ENCODE measurements at regions of chrX and their contacts with region 1.

Region 1: GRCh38 chrX:100512471-100512870 is 72.3 kb upstream of the TNMD start:
- DNase-seq: peak; percentile 9
- H3K4me3 ChIP-seq: no peak overlapping the region
- H3K27ac ChIP-seq: no peak overlapping the region
- H3K4me1 ChIP-seq: no peaks in the 10 kb centered on the region
- H3K27me3 ChIP-seq: no peaks in the 10 kb centered on the region
- CTCF ChIP-seq: peak; percentile 8 to 16
- POLR2A ChIP-seq: no peak

Region 2: GRCh38 chrX:100447654-100448397 is 64.6 kb before region 1 on chrX:
- CTCF ChIA-PET with region 1: interaction called, 10 read pairs
- POLR2A ChIA-PET with region 1: no interaction called
- dilution Hi-C with region 1: no loop called
- intact Hi-C with region 1: no loop called
- DNase-seq: peak; percentile 59
- H3K4me3 ChIP-seq: no peak overlapping the region
- H3K27ac ChIP-seq: no peak overlapping the region
- H3K4me1 ChIP-seq: peaks cover 11% of the 10 kb centered on the region
- H3K27me3 ChIP-seq: no peaks in the 10 kb centered on the region
- CTCF ChIP-seq: peak; percentile 60 to 64
- POLR2A ChIP-seq: no peak

Region 3: GRCh38 chrX:100609591-100609990 is 97.1 kb after region 1 on chrX:
- CTCF ChIA-PET with region 1: interaction called, 27 read pairs
- POLR2A ChIA-PET with region 1: no interaction called
- dilution Hi-C with region 1: no loop called
- intact Hi-C with region 1: no loop called
- DNase-seq: peak; percentile 2
- H3K4me3 ChIP-seq: no peak overlapping the region
- H3K27ac ChIP-seq: no peak overlapping the region
- H3K4me1 ChIP-seq: no peaks in the 10 kb centered on the region
- H3K27me3 ChIP-seq: no peaks in the 10 kb centered on the region
- CTCF ChIP-seq: peak in 1 of 2 donors; percentile 1
- POLR2A ChIP-seq: no peak

Region 4: GRCh38 chrX:100685284-100685996 is 173.0 kb after region 1 on chrX:
- CTCF ChIA-PET with region 1: interaction called, 15 read pairs
- POLR2A ChIA-PET with region 1: no interaction called
- dilution Hi-C with region 1: no loop called
- intact Hi-C with region 1: no loop called
- DNase-seq: peak; percentile 84
- H3K4me3 ChIP-seq: no peak overlapping the region
- H3K27ac ChIP-seq: peak overlapping the region; percentile 47
- H3K4me1 ChIP-seq: peaks cover 17% of the 10 kb centered on the region
- H3K27me3 ChIP-seq: no peaks in the 10 kb centered on the region
- CTCF ChIP-seq: peak; percentile 59 to 69
- POLR2A ChIP-seq: no peak

Measured in endothelial cell of umbilical vein (primary cell).